ENCODE measurements at regions of chr18 and their contacts with region 1.

Region 1: GRCh38 chr18:46660955-46661749 is 4.1 kb upstream of the LOXHD1 start:
- DNase-seq: no peak
- ATAC-seq: no peak
- H3K4me3 ChIP-seq: no peak overlapping the region
- H3K4me3 Mint-ChIP-seq: no peak overlapping the region
- H3K27ac ChIP-seq: no peak overlapping the region
- H3K27ac Mint-ChIP-seq: no peak overlapping the region
- H3K4me1 ChIP-seq: no peaks in the 10 kb centered on the region
- H3K4me1 Mint-ChIP-seq: no peaks in the 10 kb centered on the region
- H3K27me3 ChIP-seq: no peaks in the 10 kb centered on the region
- H3K27me3 Mint-ChIP-seq: peaks cover 2 to 12% of the 10 kb centered on the region in 2 donors
- CTCF ChIP-seq: no peak

Region 2: GRCh38 chr18:46148810-46149209 is 512.3 kb before region 1 on chr18:
- intact Hi-C with region 1: loop called (anchors 1 kb)
- DNase-seq: peak in 1 of 2 donors; percentile 73
- ATAC-seq: peak in 2 of 3 donors; percentile 58 to 66
- H3K4me3 ChIP-seq: no peak overlapping the region
- H3K4me3 Mint-ChIP-seq: no peak overlapping the region
- H3K27ac ChIP-seq: no peak overlapping the region
- H3K27ac Mint-ChIP-seq: peak overlapping the region in 1 of 2 donors; percentile 19
- H3K4me1 ChIP-seq: peaks cover 7% of the 10 kb centered on the region
- H3K4me1 Mint-ChIP-seq: peaks cover 4 to 22% of the 10 kb centered on the region in 2 donors
- H3K27me3 ChIP-seq: no peaks in the 10 kb centered on the region
- H3K27me3 Mint-ChIP-seq: no peaks in the 10 kb centered on the region
- CTCF ChIP-seq: peak; percentile 77

Region 3: DNA sequence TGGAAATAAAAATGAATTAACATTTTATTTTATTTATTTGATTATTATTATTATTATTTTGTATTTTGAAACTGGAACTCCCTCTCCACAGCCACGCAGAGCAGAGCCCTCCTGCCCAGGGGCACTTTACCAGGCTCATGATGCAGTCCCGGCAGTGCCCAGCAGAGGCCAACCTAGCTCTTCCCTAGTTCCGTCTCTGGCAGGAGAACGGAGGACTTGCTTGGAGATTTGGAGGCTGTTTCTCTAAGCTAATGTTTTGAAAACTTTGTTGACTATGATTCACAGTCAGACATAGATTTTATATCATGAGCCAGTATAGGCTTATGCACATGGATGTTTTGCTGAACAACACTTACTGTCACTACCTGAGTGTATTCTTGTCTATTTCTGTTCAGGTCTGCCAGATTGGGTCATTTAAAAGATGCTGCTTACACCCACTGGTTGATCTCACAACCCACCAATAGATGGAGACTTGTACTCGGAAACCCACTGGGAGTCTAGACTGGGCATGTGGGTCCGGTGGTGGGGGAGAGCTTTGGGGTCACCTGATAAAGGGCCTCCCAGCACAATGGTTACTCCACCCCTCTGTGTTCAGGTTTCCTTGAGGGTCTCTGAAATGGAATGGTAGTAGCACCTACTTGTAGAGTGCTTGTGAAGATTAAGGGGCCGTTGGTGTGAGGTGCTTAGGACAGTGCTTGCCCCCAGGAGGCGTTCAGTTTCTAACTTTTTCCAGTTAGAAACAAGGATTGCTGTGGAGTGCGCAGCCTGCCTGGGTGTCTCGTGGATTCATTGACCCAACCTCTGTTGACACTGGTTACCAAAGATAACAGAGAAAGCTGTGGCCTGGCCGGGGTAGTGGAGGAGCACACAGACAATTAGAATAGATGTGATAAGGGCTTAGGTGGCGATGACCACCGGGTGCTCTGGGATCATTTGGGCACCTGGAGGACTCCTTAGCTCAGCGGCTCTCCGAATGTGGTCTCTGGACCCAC is 379.7 kb before region 1 on chr18:
- intact Hi-C with region 1: loop called (anchors 1 kb)
- DNase-seq: peak; percentile 63 to 69
- ATAC-seq: peak; percentile 84 to 99 (median 97)
- H3K4me3 ChIP-seq: no peak overlapping the region
- H3K4me3 Mint-ChIP-seq: no peak overlapping the region
- H3K27ac ChIP-seq: no peak overlapping the region
- H3K27ac Mint-ChIP-seq: no peak overlapping the region
- H3K4me1 ChIP-seq: peaks cover 6% of the 10 kb centered on the region
- H3K4me1 Mint-ChIP-seq: peaks cover 7 to 16% of the 10 kb centered on the region in 2 donors
- H3K27me3 ChIP-seq: no peaks in the 10 kb centered on the region
- H3K27me3 Mint-ChIP-seq: no peaks in the 10 kb centered on the region
- CTCF ChIP-seq: peak; percentile 96

Region 4: GRCh38 chr18:46481048-46481846 is 179.9 kb before region 1 on chr18:
- intact Hi-C with region 1: loop called (anchors 5 kb)
- DNase-seq: peak; percentile 52 to 74
- ATAC-seq: peak; percentile 50 to 80 (median 77)
- H3K4me3 ChIP-seq: no peak overlapping the region
- H3K4me3 Mint-ChIP-seq: no peak overlapping the region
- H3K27ac ChIP-seq: no peak overlapping the region
- H3K27ac Mint-ChIP-seq: no peak overlapping the region
- H3K4me1 ChIP-seq: no peaks in the 10 kb centered on the region
- H3K4me1 Mint-ChIP-seq: peaks cover 7 to 12% of the 10 kb centered on the region in 2 donors
- H3K27me3 ChIP-seq: peaks cover 3% of the 10 kb centered on the region
- H3K27me3 Mint-ChIP-seq: peaks cover 6 to 8% of the 10 kb centered on the region in 2 donors
- CTCF ChIP-seq: peak; percentile 82

Region 5: GRCh38 chr18:46555724-46556123 is 105.4 kb before region 1 on chr18:
- intact Hi-C with region 1: loop called (anchors 1 kb)
- DNase-seq: peak in 1 of 2 donors; percentile 34
- ATAC-seq: peak in 1 of 3 donors; percentile 46
- H3K4me3 ChIP-seq: no peak overlapping the region
- H3K4me3 Mint-ChIP-seq: no peak overlapping the region
- H3K27ac ChIP-seq: no peak overlapping the region
- H3K27ac Mint-ChIP-seq: no peak overlapping the region
- H3K4me1 ChIP-seq: no peaks in the 10 kb centered on the region
- H3K4me1 Mint-ChIP-seq: no peaks in the 10 kb centered on the region
- H3K27me3 ChIP-seq: no peaks in the 10 kb centered on the region
- H3K27me3 Mint-ChIP-seq: no peaks in the 10 kb centered on the region
- CTCF ChIP-seq: peak; percentile 37